ENCODE measurements at regions of chr10 and their contacts with region 1.

Region 1: GRCh38 chr10:96229568-96230030 is 41.8 kb downstream of the BLNK start:
- DNase-seq: peak; percentile 48 to 82 (median 72)
- ATAC-seq: peak; percentile 73
- H3K4me3 ChIP-seq: no peak overlapping the region
- H3K4me3 Mint-ChIP-seq: no peak overlapping the region
- H3K27ac ChIP-seq: no peak overlapping the region
- H3K27ac Mint-ChIP-seq: peak overlapping the region; percentile 33
- H3K4me1 ChIP-seq: no peaks in the 10 kb centered on the region
- H3K4me1 Mint-ChIP-seq: peaks cover 1% of the 10 kb centered on the region
- H3K27me3 ChIP-seq: no peaks in the 10 kb centered on the region
- H3K27me3 Mint-ChIP-seq: no peaks in the 10 kb centered on the region
- CTCF ChIP-seq: peak; percentile 67

Region 2: DNA sequence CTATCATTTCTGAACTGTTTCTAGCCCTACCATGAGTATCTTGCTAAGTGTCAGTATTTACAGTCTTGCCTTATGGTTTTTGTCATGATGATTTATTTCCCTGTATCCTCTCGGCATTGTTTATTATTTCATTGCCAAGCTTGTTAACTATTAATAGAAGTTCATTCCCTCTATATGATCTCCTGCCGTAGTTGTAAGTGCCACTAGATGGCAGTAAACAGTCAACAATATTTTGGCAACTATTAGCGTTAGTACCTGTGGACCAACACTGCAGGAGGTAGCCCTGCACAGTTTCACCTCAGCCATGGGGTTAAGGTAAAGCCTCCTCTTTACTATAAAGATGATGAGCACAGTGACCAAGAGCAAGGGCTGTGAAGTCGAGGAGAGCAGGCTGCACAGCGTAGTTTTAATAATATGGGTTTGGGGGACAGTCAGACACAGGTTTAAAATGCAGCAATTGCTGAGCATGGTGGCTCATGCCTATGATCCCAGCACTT is 212.4 kb before region 1 on chr10:
- CTCF ChIA-PET with region 1: interaction called, 24 read pairs
- POLR2A ChIA-PET with region 1: no interaction called
- intact Hi-C with region 1: loop called (anchors 2 kb)
- DNase-seq: peak in 5 of 9 experiments; percentile 13 to 71 (median 36)
- ATAC-seq: peak; percentile 81
- H3K4me3 ChIP-seq: no peak overlapping the region
- H3K4me3 Mint-ChIP-seq: no peak overlapping the region
- H3K27ac ChIP-seq: no peak overlapping the region
- H3K27ac Mint-ChIP-seq: no peak overlapping the region
- H3K4me1 ChIP-seq: no peaks in the 10 kb centered on the region
- H3K4me1 Mint-ChIP-seq: no peaks in the 10 kb centered on the region
- H3K27me3 ChIP-seq: no peaks in the 10 kb centered on the region
- H3K27me3 Mint-ChIP-seq: peaks cover 5% of the 10 kb centered on the region
- CTCF ChIP-seq: peak; percentile 63

Region 3: DNA sequence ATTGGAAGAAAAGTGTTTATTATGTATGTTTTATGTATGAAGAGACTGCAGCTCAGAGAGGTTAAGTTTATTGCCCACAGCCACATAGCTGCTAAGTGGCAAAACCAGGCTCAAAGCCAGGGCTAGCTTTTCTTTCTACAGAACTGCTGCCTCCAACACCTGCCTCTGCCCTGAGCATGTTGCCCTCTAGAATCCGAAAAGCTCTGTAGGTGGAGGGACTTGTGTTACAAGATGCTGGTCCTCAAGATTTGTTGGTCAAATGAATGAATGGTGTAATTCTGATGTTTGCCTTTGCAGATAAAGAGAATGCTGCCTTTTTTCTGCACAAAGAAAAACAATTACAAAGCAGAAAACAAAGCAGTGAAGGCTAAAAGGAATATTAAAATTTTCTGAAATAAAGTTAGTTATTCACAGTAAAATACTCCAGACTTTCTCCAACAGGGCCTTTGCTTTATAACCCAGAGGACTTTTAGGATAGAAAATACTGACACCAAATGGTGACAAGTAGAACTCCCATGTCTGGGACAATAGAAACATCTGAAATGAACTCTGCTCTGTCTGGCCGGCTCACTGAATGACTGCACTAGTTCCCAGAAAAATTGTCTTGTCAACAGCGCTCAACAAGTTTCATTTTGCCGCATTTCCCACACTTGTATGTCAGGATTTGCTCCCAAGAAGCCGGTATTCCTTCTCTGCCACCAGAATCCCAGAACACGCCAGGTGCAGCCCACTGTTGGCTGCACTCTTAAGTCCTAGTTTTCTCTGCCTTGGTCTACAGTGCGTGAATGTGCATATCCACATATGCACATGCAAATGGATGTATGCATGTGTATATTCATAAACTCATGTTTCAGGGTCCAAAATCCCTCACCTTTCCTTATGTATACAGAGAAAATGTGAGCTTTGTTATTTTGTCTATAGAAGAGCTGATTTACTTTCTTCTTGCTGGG is 63.6 kb after region 1 on chr10:
- CTCF ChIA-PET with region 1: interaction called, 111 read pairs
- POLR2A ChIA-PET with region 1: interaction called, 3 read pairs
- intact Hi-C with region 1: loop called (anchors 1 to 2 kb)
- DNase-seq: peak in 4 of 9 experiments; percentile 10 to 51 (median 39)
- ATAC-seq: peak; percentile 54
- H3K4me3 ChIP-seq: no peak overlapping the region
- H3K4me3 Mint-ChIP-seq: no peak overlapping the region
- H3K27ac ChIP-seq: no peak overlapping the region
- H3K27ac Mint-ChIP-seq: no peak overlapping the region
- H3K4me1 ChIP-seq: peaks cover 27% of the 10 kb centered on the region
- H3K4me1 Mint-ChIP-seq: peaks cover 28% of the 10 kb centered on the region
- H3K27me3 ChIP-seq: no peaks in the 10 kb centered on the region
- H3K27me3 Mint-ChIP-seq: peaks cover 5% of the 10 kb centered on the region
- CTCF ChIP-seq: peak; percentile 63

Region 4: DNA sequence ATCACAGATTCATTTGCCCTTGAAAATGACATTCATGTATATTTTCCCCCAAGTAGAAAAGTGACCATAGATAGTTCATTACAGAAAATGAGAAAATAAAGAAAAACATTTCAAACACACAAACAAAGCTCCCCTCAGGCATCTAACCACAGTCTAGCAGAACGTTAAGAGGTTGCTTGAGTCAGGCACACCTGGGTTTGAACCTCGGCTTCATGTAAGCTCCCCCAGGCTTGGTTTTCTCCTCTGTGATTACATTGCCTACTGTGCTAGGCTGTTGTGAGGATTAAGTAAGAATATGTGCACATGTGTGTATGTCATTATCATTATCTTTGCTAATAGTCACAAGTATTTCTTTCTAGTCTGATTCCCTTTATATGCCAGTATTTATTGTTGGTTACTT is 83.7 kb after region 1 on chr10:
- CTCF ChIA-PET with region 1: interaction called, 36 read pairs
- POLR2A ChIA-PET with region 1: no interaction called
- intact Hi-C with region 1: no loop called
- DNase-seq: no peak
- ATAC-seq: no peak
- H3K4me3 ChIP-seq: no peak overlapping the region
- H3K4me3 Mint-ChIP-seq: no peak overlapping the region
- H3K27ac ChIP-seq: no peak overlapping the region
- H3K27ac Mint-ChIP-seq: no peak overlapping the region
- H3K4me1 ChIP-seq: no peaks in the 10 kb centered on the region
- H3K4me1 Mint-ChIP-seq: no peaks in the 10 kb centered on the region
- H3K27me3 ChIP-seq: no peaks in the 10 kb centered on the region
- H3K27me3 Mint-ChIP-seq: peaks cover 9% of the 10 kb centered on the region
- CTCF ChIP-seq: no peak

Region 5: GRCh38 chr10:96334616-96335526 is 105.3 kb after region 1 on chr10:
- CTCF ChIA-PET with region 1: interaction called, 64 read pairs
- POLR2A ChIA-PET with region 1: interaction called, 4 read pairs
- intact Hi-C with region 1: loop called (anchors 1 kb)
- DNase-seq: peak in 2 of 9 experiments; percentile 30
- ATAC-seq: no peak
- H3K4me3 ChIP-seq: no peak overlapping the region
- H3K4me3 Mint-ChIP-seq: no peak overlapping the region
- H3K27ac ChIP-seq: no peak overlapping the region
- H3K27ac Mint-ChIP-seq: no peak overlapping the region
- H3K4me1 ChIP-seq: peaks cover 14% of the 10 kb centered on the region
- H3K4me1 Mint-ChIP-seq: peaks cover 28% of the 10 kb centered on the region
- H3K27me3 ChIP-seq: no peaks in the 10 kb centered on the region
- H3K27me3 Mint-ChIP-seq: peaks cover 11% of the 10 kb centered on the region
- CTCF ChIP-seq: peak; percentile 32

Measured in CD8-positive, alpha-beta T cell (primary cell).